MCF 10A (cell line): ENCODE measurements at regions of chr9 and their contacts with region 1.

Region 1: GRCh38 chr9:111896353-111896958 is at the start of gene UGCG:
- DNase-seq: peak; percentile 88
- H3K4me3 Mint-ChIP-seq: no peak within 1 kb of the TSS
- H3K27ac Mint-ChIP-seq: no peak within 1 kb of the TSS
- H3K4me1 Mint-ChIP-seq: peaks cover 14% of the 10 kb centered on the region
- H3K27me3 Mint-ChIP-seq: no peaks in the 10 kb centered on the region
- CTCF ChIP-seq: no peak
- total RNA-seq, gene UGCG: 29.5 and 31.4 TPM in 2 replicates

Region 2: GRCh38 chr9:111613441-111614039 is 282.9 kb before region 1 on chr9:
- CTCF ChIA-PET with region 1: no interaction called
- POLR2A ChIA-PET with region 1: no interaction called
- intact Hi-C with region 1: no loop called
- DNase-seq: peak; percentile 13
- H3K4me3 Mint-ChIP-seq: no peak overlapping the region
- H3K27ac Mint-ChIP-seq: no peak overlapping the region
- H3K4me1 Mint-ChIP-seq: peaks cover 7% of the 10 kb centered on the region
- H3K27me3 Mint-ChIP-seq: peaks cover 12% of the 10 kb centered on the region
- CTCF ChIP-seq: no peak

Region 3: GRCh38 chr9:111631071-111631971 is 265.1 kb before region 1 on chr9 and contains the start of gene DNAJC25:
- CTCF ChIA-PET with region 1: no interaction called
- POLR2A ChIA-PET with region 1: interaction called, 18 read pairs
- intact Hi-C with region 1: no loop called
- DNase-seq: peak; percentile 98
- H3K4me3 Mint-ChIP-seq: peak within 1 kb of the TSS; percentile 99
- H3K27ac Mint-ChIP-seq: peak within 1 kb of the TSS; percentile 82
- H3K4me1 Mint-ChIP-seq: peaks cover 37% of the 10 kb centered on the region
- H3K27me3 Mint-ChIP-seq: no peaks in the 10 kb centered on the region
- CTCF ChIP-seq: no peak
- total RNA-seq, gene DNAJC25: 10.9 and 11.6 TPM in 2 replicates

Region 4: GRCh38 chr9:111759762-111760639 is 136.5 kb before region 1 on chr9:
- CTCF ChIA-PET with region 1: interaction called, 6 read pairs
- POLR2A ChIA-PET with region 1: interaction called, 32 read pairs
- intact Hi-C with region 1: loop called (anchors 1 kb)
- DNase-seq: peak; percentile 85
- H3K4me3 Mint-ChIP-seq: no peak overlapping the region
- H3K27ac Mint-ChIP-seq: peak overlapping the region; percentile 87
- H3K4me1 Mint-ChIP-seq: peaks cover 8% of the 10 kb centered on the region
- H3K27me3 Mint-ChIP-seq: no peaks in the 10 kb centered on the region
- CTCF ChIP-seq: peak; percentile 68

Region 5: GRCh38 chr9:111916234-111916645 is 19.8 kb after region 1 on chr9:
- CTCF ChIA-PET with region 1: no interaction called
- POLR2A ChIA-PET with region 1: interaction called, 24 read pairs
- intact Hi-C with region 1: no loop called
- DNase-seq: no peak
- H3K4me3 Mint-ChIP-seq: no peak overlapping the region
- H3K27ac Mint-ChIP-seq: no peak overlapping the region
- H3K4me1 Mint-ChIP-seq: peaks cover 16% of the 10 kb centered on the region
- H3K27me3 Mint-ChIP-seq: no peaks in the 10 kb centered on the region
- CTCF ChIP-seq: no peak

Region 6: GRCh38 chr9:112012026-112012902 is 115.8 kb after region 1 on chr9:
- CTCF ChIA-PET with region 1: no interaction called
- POLR2A ChIA-PET with region 1: interaction called, 31 read pairs
- intact Hi-C with region 1: no loop called
- DNase-seq: peak; percentile 92
- H3K4me3 Mint-ChIP-seq: peak overlapping the region; percentile 8
- H3K27ac Mint-ChIP-seq: peak overlapping the region; percentile 84
- H3K4me1 Mint-ChIP-seq: peaks cover 31% of the 10 kb centered on the region
- H3K27me3 Mint-ChIP-seq: no peaks in the 10 kb centered on the region
- CTCF ChIP-seq: no peak

Region 7: GRCh38 chr9:112061152-112061740 is 164.8 kb after region 1 on chr9:
- CTCF ChIA-PET with region 1: interaction called, 4 read pairs
- POLR2A ChIA-PET with region 1: interaction called, 19 read pairs
- intact Hi-C with region 1: no loop called
- DNase-seq: peak; percentile 92
- H3K4me3 Mint-ChIP-seq: no peak overlapping the region
- H3K27ac Mint-ChIP-seq: peak overlapping the region; percentile 53
- H3K4me1 Mint-ChIP-seq: peaks cover 43% of the 10 kb centered on the region
- H3K27me3 Mint-ChIP-seq: no peaks in the 10 kb centered on the region
- CTCF ChIP-seq: no peak